Colonic mucosa (tissue), 4 donors: ENCODE measurements at regions of chr11 and their contacts with region 1.

Region 1: GRCh38 chr11:44538375-44539054 is 26.9 kb upstream of the CD82 start:
- DNase-seq: peak; percentile 69
- H3K4me3 ChIP-seq: no peak overlapping the region
- H3K27ac ChIP-seq: no peak overlapping the region
- H3K4me1 ChIP-seq: no peaks in the 10 kb centered on the region
- H3K27me3 ChIP-seq: no peaks in the 10 kb centered on the region
- CTCF ChIP-seq: peak; percentile 91

Region 2: GRCh38 chr11:44094260-44094868 is 444.2 kb before region 1 on chr11:
- intact Hi-C with region 1: loop called (anchors 5 kb)
- DNase-seq: peak; percentile 89
- H3K4me3 ChIP-seq: no peak overlapping the region
- H3K27ac ChIP-seq: no peak overlapping the region
- H3K4me1 ChIP-seq: peaks cover 7% of the 10 kb centered on the region
- H3K27me3 ChIP-seq: no peaks in the 10 kb centered on the region
- CTCF ChIP-seq: peak; percentile 77

Region 3: DNA sequence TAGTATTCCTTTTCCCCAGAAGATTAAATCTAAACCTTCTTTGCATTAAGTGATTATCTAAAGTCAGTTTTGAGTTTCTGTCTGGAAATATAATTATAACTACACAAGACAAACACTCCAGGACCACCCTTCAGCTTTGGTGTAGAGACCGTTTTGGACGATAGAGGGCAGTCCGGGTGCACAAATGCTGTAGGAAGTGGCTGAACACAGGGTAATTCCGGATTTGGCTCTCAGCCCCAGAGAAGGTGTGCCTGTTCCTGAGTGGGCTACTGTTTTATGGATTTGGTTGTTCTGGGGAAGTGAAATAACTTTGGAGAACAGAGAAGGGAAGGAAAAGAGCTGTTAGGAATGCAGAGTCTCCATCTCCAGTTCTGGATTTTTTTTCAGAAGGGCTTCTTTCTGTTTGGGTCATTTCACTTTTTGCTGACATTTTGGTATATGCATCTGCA is 428.3 kb before region 1 on chr11:
- intact Hi-C with region 1: loop called (anchors 5 kb)
- DNase-seq: peak; percentile 69
- H3K4me3 ChIP-seq: no peak overlapping the region
- H3K27ac ChIP-seq: no peak overlapping the region
- H3K4me1 ChIP-seq: no peaks in the 10 kb centered on the region
- H3K27me3 ChIP-seq: no peaks in the 10 kb centered on the region
- CTCF ChIP-seq: peak; percentile 62

Region 4: GRCh38 chr11:44286268-44286880 is 252.1 kb before region 1 on chr11:
- intact Hi-C with region 1: loop called (anchors 2 kb)
- DNase-seq: peak; percentile 33
- H3K4me3 ChIP-seq: no peak overlapping the region
- H3K27ac ChIP-seq: no peak overlapping the region
- H3K4me1 ChIP-seq: no peaks in the 10 kb centered on the region
- H3K27me3 ChIP-seq: no peaks in the 10 kb centered on the region
- CTCF ChIP-seq: peak; percentile 91

Region 5: GRCh38 chr11:44445500-44446365 is 92.8 kb before region 1 on chr11:
- intact Hi-C with region 1: no loop called
- DNase-seq: no peak
- H3K4me3 ChIP-seq: no peak overlapping the region
- H3K27ac ChIP-seq: no peak overlapping the region
- H3K4me1 ChIP-seq: no peaks in the 10 kb centered on the region
- H3K27me3 ChIP-seq: no peaks in the 10 kb centered on the region
- CTCF ChIP-seq: no peak